HepG2 (cell line): ENCODE measurements at regions of chr21 and their contacts with region 1.

Region 1: DNA sequence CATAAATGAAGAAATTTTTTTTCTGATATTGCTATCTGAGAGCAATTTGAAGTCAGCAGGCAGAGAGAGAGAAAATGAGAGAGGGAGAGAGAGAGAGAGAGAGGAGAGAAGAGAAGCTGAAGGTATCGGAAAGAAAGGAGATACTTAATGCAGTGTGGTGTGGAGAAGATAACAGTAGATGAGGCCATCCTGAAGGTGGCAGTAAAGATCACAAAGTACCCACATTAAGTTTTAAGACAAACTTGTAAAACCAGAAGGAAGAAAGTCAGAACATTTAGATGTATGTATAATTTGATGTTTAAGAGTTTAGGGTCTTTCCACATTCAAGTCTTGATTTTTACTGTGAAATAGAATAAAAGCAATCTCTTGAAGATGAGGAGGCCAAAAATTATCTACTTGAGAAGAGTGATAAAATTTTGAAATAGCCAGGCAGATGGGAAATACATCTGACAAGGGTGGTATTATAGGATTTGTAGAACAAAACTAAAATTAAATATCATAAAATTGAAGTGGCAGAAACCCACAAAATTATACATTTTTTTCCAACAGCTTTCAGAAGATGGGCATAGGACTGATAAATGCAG is 1753.4 kb downstream of the MRPL39 start:
- DNase-seq: no peak
- ATAC-seq: peak; percentile 63
- H3K4me3 ChIP-seq: no peak overlapping the region
- H3K27ac ChIP-seq: no peak overlapping the region
- H3K4me1 ChIP-seq: no peaks in the 10 kb centered on the region
- H3K27me3 ChIP-seq: no peaks in the 10 kb centered on the region
- CTCF ChIP-seq: peak; percentile 28; the same call in 1 of the 2 replicates
- EP300 ChIP-seq: no peak
- POLR2A ChIP-seq: no peak
- RAD21 ChIP-seq: no peak

Region 2: GRCh38 chr21:24014381-24014780 is 160.5 kb after region 1 on chr21:
- CTCF ChIA-PET with region 1: no interaction called
- POLR2A ChIA-PET with region 1: no interaction called
- in situ Hi-C with region 1: no loop called
- intact Hi-C with region 1: no loop called
- DNase-seq: no peak
- ATAC-seq: no peak
- H3K4me3 ChIP-seq: no peak overlapping the region
- H3K27ac ChIP-seq: no peak overlapping the region
- H3K4me1 ChIP-seq: no peaks in the 10 kb centered on the region
- H3K27me3 ChIP-seq: no peaks in the 10 kb centered on the region
- CTCF ChIP-seq: no peak
- EP300 ChIP-seq: no peak
- POLR2A ChIP-seq: no peak
- RAD21 ChIP-seq: no peak

Region 3: GRCh38 chr21:24514081-24514733 is 660.3 kb after region 1 on chr21:
- CTCF ChIA-PET with region 1: no interaction called
- POLR2A ChIA-PET with region 1: no interaction called
- in situ Hi-C with region 1: no loop called
- intact Hi-C with region 1: loop called (anchors 10 kb)
- DNase-seq: no peak
- ATAC-seq: no peak
- H3K4me3 ChIP-seq: no peak overlapping the region
- H3K27ac ChIP-seq: no peak overlapping the region
- H3K4me1 ChIP-seq: no peaks in the 10 kb centered on the region
- H3K27me3 ChIP-seq: no peaks in the 10 kb centered on the region
- CTCF ChIP-seq: no peak
- EP300 ChIP-seq: no peak
- POLR2A ChIP-seq: no peak
- RAD21 ChIP-seq: no peak

Region 4: GRCh38 chr21:24561291-24561690 is 707.4 kb after region 1 on chr21:
- CTCF ChIA-PET with region 1: no interaction called
- POLR2A ChIA-PET with region 1: no interaction called
- in situ Hi-C with region 1: no loop called
- intact Hi-C with region 1: no loop called
- DNase-seq: no peak
- ATAC-seq: no peak
- H3K4me3 ChIP-seq: no peak overlapping the region
- H3K27ac ChIP-seq: no peak overlapping the region
- H3K4me1 ChIP-seq: no peaks in the 10 kb centered on the region
- H3K27me3 ChIP-seq: no peaks in the 10 kb centered on the region
- CTCF ChIP-seq: no peak
- EP300 ChIP-seq: no peak
- POLR2A ChIP-seq: no peak
- RAD21 ChIP-seq: no peak

Region 5: GRCh38 chr21:25385911-25386474 is 1532.1 kb after region 1 on chr21:
- CTCF ChIA-PET with region 1: no interaction called
- POLR2A ChIA-PET with region 1: no interaction called
- in situ Hi-C with region 1: no loop called
- intact Hi-C with region 1: loop called (anchors 5 kb)
- DNase-seq: peak; percentile 72
- ATAC-seq: peak; percentile 99
- H3K4me3 ChIP-seq: no peak overlapping the region
- H3K27ac ChIP-seq: no peak overlapping the region
- H3K4me1 ChIP-seq: peaks cover 5% of the 10 kb centered on the region; the same call in 1 of the 2 replicates
- H3K27me3 ChIP-seq: no peaks in the 10 kb centered on the region
- CTCF ChIP-seq: peak; percentile 66
- EP300 ChIP-seq: no peak
- POLR2A ChIP-seq: no peak
- RAD21 ChIP-seq: 0 out of 2 replicates have a peak, but pooled peaks have one; percentile 49